HEK293 (cell line): ENCODE measurements at regions of chr4 and their contacts with region 1.

Region 1: DNA sequence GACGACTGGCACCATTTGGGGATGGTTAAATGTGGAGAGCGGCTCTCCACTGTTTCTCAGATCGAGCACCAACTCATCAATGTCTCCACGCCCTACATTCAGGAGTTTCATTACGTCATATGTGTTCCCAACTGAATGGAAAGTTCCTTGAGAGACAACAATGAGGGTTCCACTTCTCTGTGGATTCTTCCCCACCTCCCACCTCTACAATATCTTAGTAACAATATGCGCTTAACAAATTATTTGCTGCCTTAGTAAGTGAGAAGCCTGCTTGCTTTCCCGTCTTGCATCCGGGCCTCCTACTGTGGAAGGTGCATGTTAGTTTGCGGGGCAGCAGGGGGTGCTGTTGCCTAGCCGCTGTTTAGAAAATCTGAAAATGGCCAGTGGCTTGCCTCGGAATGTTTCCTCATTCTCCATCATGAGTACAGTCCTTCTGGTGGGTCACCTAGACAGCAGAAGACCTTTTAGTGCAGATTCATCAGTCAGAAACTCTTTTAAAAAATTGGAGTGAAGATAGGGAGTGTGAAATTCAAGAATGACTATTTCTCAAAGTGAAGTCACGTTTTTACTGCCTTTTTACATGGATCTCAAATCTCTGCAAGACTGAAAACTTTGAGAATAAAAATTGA is 55.7 kb downstream of the PHOX2B start:
- H3K4me3 ChIP-seq: no peak overlapping the region
- H3K27ac ChIP-seq: no peak overlapping the region
- H3K4me1 ChIP-seq: no peaks in the 10 kb centered on the region
- CTCF ChIP-seq: peak; percentile 61; the same call in 1 of the 2 replicates

Region 2: DNA sequence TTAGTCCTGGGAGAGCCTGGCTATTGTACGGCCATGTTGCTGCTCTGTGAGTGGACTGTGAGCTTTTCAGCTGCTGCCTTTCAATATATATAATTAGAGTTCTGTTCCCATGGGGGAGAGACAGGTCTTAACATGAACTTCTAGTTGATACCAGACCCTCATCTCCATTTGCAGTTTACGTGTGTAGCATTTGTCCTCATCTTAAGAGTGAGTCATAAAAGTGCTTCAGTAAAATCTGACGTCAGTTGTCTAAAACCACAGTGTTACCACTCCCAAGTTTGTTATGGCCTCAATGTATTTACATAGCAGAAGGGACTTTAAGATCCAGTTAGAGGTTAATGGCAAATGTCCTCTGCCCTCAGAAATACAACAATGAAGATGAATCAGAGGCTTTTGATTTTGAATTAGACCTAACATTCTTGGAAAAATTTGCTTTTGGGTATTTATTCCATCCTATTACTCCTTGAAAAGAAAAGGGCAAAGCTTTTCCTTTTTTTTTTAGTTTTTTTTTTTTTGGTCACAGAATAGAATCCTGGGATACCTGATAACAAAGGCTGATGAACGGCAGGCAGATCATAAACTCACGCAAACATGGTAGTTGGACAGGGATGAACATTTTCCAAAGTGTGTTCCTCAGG is 17.1 kb after region 1 on chr4:
- CTCF ChIA-PET with region 1: interaction called, 11 read pairs
- POLR2A ChIA-PET with region 1: no interaction called
- H3K4me3 ChIP-seq: no peak overlapping the region
- H3K27ac ChIP-seq: no peak overlapping the region
- H3K4me1 ChIP-seq: no peaks in the 10 kb centered on the region; the same call in 1 of the 2 replicates
- CTCF ChIP-seq: no peak

Region 3: DNA sequence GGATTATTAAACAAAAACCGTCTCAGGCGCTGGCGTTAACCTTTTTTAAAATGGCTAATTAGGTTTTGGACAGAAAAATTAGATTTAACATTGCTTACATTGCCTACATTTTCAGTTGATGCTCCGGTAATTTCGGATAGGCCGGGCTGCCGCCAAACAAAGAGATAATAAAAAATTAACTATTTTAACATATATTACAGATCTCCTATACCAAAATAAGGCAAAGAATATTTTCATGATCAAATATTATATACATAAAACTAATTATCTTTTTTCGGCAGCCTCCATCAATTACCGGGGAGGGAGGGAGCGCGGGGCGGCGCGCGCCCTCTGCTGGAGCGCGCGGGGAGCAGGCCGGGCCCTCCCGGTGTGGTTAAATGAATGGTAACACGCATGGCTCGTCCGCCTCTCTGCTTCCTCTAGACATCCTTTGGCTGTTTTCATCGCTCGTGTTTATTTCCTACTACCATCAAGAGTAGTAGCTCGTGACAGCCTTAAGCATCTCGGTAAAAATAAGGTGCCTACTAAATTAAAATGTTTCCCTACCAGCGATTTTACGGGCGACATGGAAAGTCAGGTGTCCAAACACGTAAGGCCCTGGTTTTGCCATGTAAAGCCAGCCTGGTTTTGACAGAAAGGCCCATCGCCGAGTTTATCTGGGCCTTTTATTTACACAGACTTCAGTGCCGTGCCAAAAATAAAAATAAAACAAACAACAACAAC is 190.0 kb after region 1 on chr4:
- CTCF ChIA-PET with region 1: interaction called, 60 read pairs
- POLR2A ChIA-PET with region 1: no interaction called
- H3K4me3 ChIP-seq: peak overlapping the region; percentile 35; the same call in 1 of the 2 replicates
- H3K27ac ChIP-seq: no peak overlapping the region
- H3K4me1 ChIP-seq: no peaks in the 10 kb centered on the region
- CTCF ChIP-seq: 0 out of 2 replicates have a peak, but pooled peaks have one; percentile 22

Region 4: DNA sequence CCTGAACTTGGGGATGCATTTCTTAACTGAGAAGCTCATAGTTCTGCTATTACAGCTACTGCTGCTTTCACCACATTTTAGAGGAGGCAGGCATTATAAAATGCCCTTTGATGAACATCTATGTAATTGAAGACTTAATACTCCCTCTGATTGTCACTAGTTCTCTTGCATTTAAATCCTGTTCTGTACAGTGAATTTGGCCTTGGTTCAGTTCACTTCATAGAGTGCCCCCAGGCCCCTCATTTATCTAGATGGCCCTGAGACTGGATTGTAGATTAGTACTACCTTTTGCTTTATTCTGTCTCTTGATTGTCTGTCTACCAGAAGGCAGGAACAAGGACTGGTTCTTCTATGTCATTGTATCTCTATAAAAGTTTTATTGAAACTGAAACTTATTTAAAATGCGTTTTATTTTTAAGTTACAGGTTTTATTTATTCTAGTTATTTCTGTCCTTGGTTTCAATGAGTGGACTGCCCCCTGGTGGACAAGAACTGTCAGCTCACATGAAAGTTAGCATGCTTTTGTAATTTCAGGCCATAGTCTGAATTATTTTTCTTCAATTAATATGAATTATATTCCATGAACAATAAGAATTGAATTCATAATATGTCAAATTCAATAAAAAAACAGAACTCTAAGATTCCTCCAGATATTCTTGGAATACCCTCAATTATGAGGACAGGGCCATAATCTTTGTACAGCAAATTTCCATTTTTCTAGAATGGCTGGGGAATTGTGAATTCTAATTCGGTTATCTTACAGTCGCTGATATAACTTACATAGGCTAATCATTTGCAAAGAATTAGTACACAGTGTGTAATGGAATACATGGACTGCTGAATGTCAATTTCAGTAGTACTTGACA is 195.2 kb after region 1 on chr4:
- CTCF ChIA-PET with region 1: interaction called, 60 read pairs
- POLR2A ChIA-PET with region 1: no interaction called
- H3K4me3 ChIP-seq: no peak overlapping the region
- H3K27ac ChIP-seq: no peak overlapping the region
- H3K4me1 ChIP-seq: no peaks in the 10 kb centered on the region
- CTCF ChIP-seq: no peak